ENCODE measurements at regions of chr17 and their contacts with region 1.

Region 1: GRCh38 chr17:48084932-48085444 is 16.3 kb downstream of the CBX1 start:
- H3K4me3 ChIP-seq: no peak overlapping the region
- H3K27ac ChIP-seq: no peak overlapping the region
- H3K4me1 ChIP-seq: peaks cover 18% of the 10 kb centered on the region
- CTCF ChIP-seq: no peak

Region 2: DNA sequence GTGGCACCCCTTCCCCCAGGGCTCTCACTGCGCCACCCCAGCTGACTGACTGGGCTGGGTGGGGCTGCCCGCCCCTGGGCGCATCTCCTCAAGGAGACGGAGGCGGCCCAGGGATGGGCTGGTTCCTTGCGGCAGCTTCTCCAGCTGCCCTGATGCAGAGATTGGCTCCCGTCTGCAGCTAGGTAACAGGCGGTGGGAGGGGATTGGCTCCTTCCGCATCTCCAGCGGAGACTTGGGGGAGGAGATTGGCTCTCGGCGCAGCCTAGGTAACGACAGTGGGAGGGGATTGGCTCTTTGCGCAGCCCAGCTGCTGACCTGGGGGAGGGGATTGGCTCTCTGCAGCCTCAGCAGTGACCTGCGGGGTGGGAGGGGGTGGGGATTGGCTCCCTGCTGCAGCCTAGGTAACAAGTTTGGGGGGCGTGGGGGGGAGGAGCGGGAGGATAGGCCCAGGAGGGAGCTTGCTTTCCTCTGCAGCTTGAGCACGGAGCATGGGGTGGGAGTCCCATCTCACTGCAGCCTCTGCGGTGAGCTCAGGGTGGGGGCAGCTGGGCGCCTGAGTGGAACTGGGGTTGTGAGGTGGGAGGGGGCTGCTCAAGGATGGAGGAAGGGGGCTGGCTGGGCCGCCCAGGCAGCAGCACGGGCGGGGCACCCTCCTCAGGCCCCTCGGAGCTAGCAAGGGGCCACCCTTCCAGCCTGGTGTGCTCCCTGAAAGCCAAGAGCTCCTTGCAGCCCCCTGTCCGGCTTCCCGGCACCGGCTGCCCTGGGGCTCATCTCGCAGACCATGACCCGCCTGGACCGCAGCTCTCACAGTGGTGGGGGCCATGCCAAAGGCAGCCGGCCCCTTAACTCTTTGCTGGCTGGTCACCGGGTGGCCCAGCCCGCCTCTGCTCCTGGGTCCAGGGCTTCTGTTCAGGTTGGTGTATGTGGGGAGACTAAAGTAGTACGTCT is 30.5 kb before region 1 on chr17:
- CTCF ChIA-PET with region 1: interaction called, 18 read pairs
- POLR2A ChIA-PET with region 1: interaction called, 5 read pairs
- H3K4me3 ChIP-seq: no peak overlapping the region
- H3K27ac ChIP-seq: peak overlapping the region; percentile 77; the same call in 1 of the 2 replicates
- H3K4me1 ChIP-seq: peaks cover 49% of the 10 kb centered on the region
- CTCF ChIP-seq: no peak

Region 3: DNA sequence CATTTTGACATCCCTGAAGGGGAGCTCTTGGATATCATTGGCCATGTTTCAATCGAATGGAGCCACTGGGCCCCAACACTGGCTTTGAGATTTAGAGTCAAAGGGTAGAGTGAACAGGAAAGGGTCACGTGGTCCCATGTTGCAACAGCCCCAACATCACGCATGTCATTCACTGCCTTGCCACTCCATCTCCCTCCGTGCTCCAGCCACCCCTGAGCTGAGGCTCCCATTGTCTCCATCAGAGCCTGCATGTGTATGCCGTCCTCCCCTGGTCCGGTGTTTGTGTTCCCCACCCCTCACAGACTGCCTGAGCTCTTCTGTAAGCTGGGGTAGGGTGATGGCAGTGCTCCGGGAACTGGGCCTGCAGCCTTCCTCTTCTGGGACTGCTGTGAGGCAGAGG is 24.7 kb before region 1 on chr17:
- CTCF ChIA-PET with region 1: interaction called, 22 read pairs
- POLR2A ChIA-PET with region 1: no interaction called
- H3K4me3 ChIP-seq: no peak overlapping the region
- H3K27ac ChIP-seq: no peak overlapping the region
- H3K4me1 ChIP-seq: peaks cover 3% of the 10 kb centered on the region; the same call in 1 of the 2 replicates
- CTCF ChIP-seq: no peak

Region 4: GRCh38 chr17:48068491-48068961 is 16.5 kb before region 1 on chr17:
- CTCF ChIA-PET with region 1: interaction called, 22 read pairs
- POLR2A ChIA-PET with region 1: interaction called, 3 read pairs
- H3K4me3 ChIP-seq: no peak overlapping the region
- H3K27ac ChIP-seq: 0 out of 2 replicates have a peak overlapping the region, but pooled peaks have one; percentile 26
- H3K4me1 ChIP-seq: no peaks in the 10 kb centered on the region
- CTCF ChIP-seq: no peak

Region 5: DNA sequence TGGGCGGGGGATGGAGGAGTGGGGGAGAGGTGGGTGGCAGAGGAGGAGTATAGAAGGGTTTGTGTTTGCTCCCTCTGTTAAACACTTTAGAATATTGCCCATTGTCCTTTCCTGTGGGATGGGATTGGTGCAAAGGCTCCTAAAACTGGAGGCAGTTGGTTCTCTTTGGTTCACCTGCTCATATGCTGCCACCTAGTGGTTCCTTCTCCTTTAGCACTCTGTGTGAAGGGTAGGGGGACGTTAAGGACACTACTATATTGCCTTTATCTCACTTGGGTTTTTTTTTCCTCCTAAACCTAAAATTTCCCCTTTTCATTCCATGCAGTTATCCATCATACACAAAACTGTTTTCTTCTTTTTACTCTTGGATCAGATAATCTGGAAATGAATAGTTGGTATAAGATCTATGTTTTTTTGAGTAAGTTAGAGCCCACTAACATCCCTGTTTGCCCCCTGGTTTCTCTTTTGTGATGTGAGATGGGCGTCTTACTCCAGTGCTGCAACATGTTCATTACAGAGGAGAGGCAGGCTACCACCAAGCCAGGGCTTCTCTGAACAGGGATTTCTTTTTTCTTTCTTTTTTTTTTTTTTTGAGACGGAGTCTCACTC is 46.3 kb after region 1 on chr17:
- CTCF ChIA-PET with region 1: interaction called, 24 read pairs
- POLR2A ChIA-PET with region 1: no interaction called
- H3K4me3 ChIP-seq: no peak overlapping the region
- H3K27ac ChIP-seq: no peak overlapping the region
- H3K4me1 ChIP-seq: no peaks in the 10 kb centered on the region
- CTCF ChIP-seq: peak; percentile 68; the same call in 1 of the 2 replicates